ENCODE measurements at regions of chr5 and their contacts with region 1.

Region 1: GRCh38 chr5:170791325-170791954 is 7.9 kb downstream of the GABRP start:
- DNase-seq: no peak
- H3K4me3 Mint-ChIP-seq: no peak overlapping the region
- H3K27ac Mint-ChIP-seq: no peak overlapping the region
- H3K4me1 Mint-ChIP-seq: no peaks in the 10 kb centered on the region
- H3K27me3 Mint-ChIP-seq: peaks cover 4% of the 10 kb centered on the region

Region 2: DNA sequence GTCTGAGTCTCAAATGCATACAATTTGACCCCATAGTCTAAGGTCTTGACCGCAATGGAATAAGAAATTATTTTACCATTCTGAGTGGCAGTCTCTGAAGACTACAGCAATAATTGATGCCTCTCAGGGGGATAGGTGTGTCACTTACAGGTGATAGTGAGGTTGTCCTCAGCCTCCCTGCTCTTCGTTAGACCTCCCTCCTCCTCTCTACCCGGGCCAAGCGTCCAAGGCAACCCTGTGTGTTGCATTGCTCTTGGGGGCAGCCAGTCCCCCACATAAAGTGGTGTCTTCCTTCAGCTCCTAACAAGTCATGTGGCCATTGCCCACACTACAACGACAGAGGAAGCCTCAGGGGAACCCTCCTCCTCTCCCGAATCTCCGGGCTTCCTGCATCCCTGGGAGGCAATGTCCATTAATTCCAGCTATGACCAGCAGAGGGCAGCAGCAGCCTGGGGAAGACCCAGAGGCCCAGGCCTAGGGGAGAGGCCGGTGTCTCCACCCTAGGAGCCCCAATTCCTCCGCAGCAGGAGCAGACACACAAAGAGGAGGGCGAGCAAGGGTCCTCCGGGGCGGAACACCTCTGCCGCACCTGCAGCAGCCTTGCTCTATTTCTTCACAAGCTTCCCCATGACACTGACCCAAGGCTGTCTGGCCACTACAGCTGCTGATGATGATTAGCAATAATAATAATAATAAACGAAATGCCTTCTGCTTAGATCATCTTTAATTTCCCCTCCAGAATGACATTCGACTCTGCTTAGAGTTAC is 152.8 kb before region 1 on chr5:
- CTCF ChIA-PET with region 1: interaction called, 10 read pairs
- POLR2A ChIA-PET with region 1: no interaction called
- DNase-seq: peak; percentile 67
- H3K4me3 Mint-ChIP-seq: no peak overlapping the region
- H3K27ac Mint-ChIP-seq: no peak overlapping the region
- H3K4me1 Mint-ChIP-seq: peaks cover 2% of the 10 kb centered on the region
- H3K27me3 Mint-ChIP-seq: peaks cover 6% of the 10 kb centered on the region

Region 3: GRCh38 chr5:170716396-170716795 is 75.0 kb before region 1 on chr5:
- CTCF ChIA-PET with region 1: no interaction called
- POLR2A ChIA-PET with region 1: no interaction called
- DNase-seq: no peak
- H3K4me3 Mint-ChIP-seq: no peak overlapping the region
- H3K27ac Mint-ChIP-seq: no peak overlapping the region
- H3K4me1 Mint-ChIP-seq: no peaks in the 10 kb centered on the region
- H3K27me3 Mint-ChIP-seq: peaks cover 9% of the 10 kb centered on the region

Measured in activated CD4-positive, alpha-beta memory T cell treated with anti-CD3 and anti-CD28 coated beads, Interleukin-2, amount 10 ng/mL, durations not matched to agents 7 days and 5 days (primary cell).